ENCODE measurements at regions of chr18 and their contacts with region 1.

Region 1: DNA sequence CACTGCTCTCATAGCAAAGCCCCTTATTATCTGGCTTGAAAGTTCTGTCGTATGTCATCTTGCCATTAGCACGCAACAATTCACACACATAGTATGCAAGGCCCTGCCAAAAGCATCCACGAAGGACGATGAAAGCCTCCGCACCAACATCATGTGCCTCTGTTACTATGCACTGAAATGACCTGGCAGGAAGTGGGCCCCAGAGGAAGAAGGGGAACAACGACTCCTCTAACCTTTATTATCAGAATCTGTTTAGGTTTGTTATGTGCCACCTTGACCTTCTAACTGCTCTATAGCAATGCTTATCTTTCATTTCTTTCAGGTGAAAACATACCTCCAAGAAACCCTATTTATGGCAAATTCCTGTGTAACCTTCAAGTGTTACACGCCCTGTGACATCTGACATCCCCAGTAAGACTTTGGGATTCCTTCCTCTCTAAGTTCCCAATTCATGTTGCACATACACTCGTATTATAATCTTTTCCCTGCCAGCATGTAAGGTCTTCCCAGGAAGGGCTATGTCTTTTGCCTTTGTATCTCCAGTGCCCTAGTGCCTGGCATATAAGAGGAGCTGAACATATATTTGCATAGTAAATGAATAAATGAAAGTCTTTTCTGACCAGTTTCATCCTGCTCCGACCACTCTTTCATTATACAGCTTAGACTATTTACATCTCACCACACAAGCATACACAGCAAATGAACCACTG is 7.0 kb upstream of the NDUFV2 start:
- DNase-seq: peak; percentile 77
- H3K4me3 Mint-ChIP-seq: peak overlapping the region; percentile 62
- H3K27ac Mint-ChIP-seq: peak overlapping the region; percentile 98
- H3K4me1 Mint-ChIP-seq: peaks cover 71% of the 10 kb centered on the region
- H3K27me3 Mint-ChIP-seq: no peaks in the 10 kb centered on the region

Region 2: GRCh38 chr18:9109523-9109922 is 14.1 kb after region 1 on chr18:
- CTCF ChIA-PET with region 1: interaction called, 4 read pairs
- POLR2A ChIA-PET with region 1: interaction called, 1,351 read pairs
- DNase-seq: no peak
- H3K4me3 Mint-ChIP-seq: peak overlapping the region; percentile 45
- H3K27ac Mint-ChIP-seq: peak overlapping the region; percentile 37
- H3K4me1 Mint-ChIP-seq: peaks cover 83% of the 10 kb centered on the region
- H3K27me3 Mint-ChIP-seq: no peaks in the 10 kb centered on the region

Region 3: DNA sequence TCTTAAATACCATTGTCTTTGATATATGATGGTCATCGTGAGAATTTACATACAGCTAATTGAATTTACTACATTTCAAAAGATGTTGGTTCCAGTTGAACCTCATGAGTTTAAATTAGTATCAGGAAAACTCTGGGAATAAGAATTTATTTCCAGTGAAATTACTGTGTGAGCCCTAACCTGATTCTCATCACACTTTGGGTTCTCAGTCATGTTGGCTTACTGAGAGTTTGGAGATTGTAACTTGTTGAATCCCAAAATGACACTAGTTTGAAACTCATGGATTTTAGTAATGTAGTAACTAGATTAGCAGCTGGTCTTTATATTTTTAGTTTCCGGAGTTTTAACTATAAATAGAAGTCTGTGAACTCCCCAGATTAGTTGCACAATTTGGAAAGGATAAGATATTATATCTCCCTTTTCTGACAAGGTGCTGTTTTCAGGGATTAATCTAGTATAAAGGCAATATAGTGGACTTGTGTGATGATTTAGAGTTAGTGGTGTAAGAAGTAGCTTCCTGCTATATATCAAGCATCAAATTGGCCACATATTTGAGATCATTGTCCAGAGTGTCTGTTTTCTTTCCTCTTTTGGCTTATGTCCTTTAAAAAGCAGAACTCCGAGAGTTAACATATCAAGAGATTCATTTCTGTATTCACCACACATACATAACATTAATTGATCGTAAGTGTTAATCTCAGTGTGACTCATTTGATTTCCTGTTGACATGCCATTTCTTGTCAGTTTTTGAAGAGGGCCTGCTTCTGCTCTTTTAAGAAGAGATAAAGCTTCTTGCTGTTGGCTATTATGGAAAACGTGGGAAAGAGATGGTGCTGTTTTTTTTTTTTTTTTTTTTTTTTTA is 22.8 kb after region 1 on chr18:
- CTCF ChIA-PET with region 1: interaction called, 3 read pairs
- POLR2A ChIA-PET with region 1: interaction called, 479 read pairs
- DNase-seq: no peak
- H3K4me3 Mint-ChIP-seq: peak overlapping the region; percentile 50
- H3K27ac Mint-ChIP-seq: peak overlapping the region; percentile 76
- H3K4me1 Mint-ChIP-seq: peaks cover 78% of the 10 kb centered on the region
- H3K27me3 Mint-ChIP-seq: no peaks in the 10 kb centered on the region

Region 4: GRCh38 chr18:9147440-9148202 is 52.2 kb after region 1 on chr18:
- CTCF ChIA-PET with region 1: interaction called, 5 read pairs
- POLR2A ChIA-PET with region 1: interaction called, 752 read pairs
- DNase-seq: peak; percentile 30
- H3K4me3 Mint-ChIP-seq: peak overlapping the region; percentile 26
- H3K27ac Mint-ChIP-seq: peak overlapping the region; percentile 81
- H3K4me1 Mint-ChIP-seq: peaks cover 73% of the 10 kb centered on the region
- H3K27me3 Mint-ChIP-seq: no peaks in the 10 kb centered on the region